IMR-90 (cell line): ENCODE measurements at regions of chr18 and their contacts with region 1.

Region 1: GRCh38 chr18:75209129-75209950 is at the start of gene PTGR3:
- DNase-seq: peak; percentile 73
- ATAC-seq: peak; percentile 57
- H3K4me3 ChIP-seq: peak within 1 kb of the TSS; percentile 90
- H3K27ac ChIP-seq: peak within 1 kb of the TSS; percentile 98
- H3K4me1 ChIP-seq: peaks cover 5% of the 10 kb centered on the region
- H3K27me3 ChIP-seq: no peaks in the 10 kb centered on the region
- CTCF ChIP-seq: no peak
- POLR2A ChIP-seq: no peak; the same call in 1 of the 2 replicates
- RAD21 ChIP-seq: no peak
- total RNA-seq, gene PTGR3: 16.1 and 16.9 TPM in 2 replicates

Region 2: GRCh38 chr18:74896390-74896991 is 312.8 kb before region 1 on chr18:
- CTCF ChIA-PET with region 1: no interaction called
- POLR2A ChIA-PET with region 1: no interaction called
- dilution Hi-C with region 1: no loop called
- in situ Hi-C with region 1: no loop called
- intact Hi-C with region 1: loop called (anchors 5 kb)
- DNase-seq: peak; percentile 12
- ATAC-seq: no peak
- H3K4me3 ChIP-seq: no peak overlapping the region
- H3K27ac ChIP-seq: no peak overlapping the region
- H3K4me1 ChIP-seq: peaks cover 7% of the 10 kb centered on the region
- H3K27me3 ChIP-seq: no peaks in the 10 kb centered on the region
- CTCF ChIP-seq: 0 out of 2 replicates have a peak, but pooled peaks have one; percentile 11
- POLR2A ChIP-seq: no peak
- RAD21 ChIP-seq: peak; percentile 24; the same call in 1 of the 2 replicates

Region 3: DNA sequence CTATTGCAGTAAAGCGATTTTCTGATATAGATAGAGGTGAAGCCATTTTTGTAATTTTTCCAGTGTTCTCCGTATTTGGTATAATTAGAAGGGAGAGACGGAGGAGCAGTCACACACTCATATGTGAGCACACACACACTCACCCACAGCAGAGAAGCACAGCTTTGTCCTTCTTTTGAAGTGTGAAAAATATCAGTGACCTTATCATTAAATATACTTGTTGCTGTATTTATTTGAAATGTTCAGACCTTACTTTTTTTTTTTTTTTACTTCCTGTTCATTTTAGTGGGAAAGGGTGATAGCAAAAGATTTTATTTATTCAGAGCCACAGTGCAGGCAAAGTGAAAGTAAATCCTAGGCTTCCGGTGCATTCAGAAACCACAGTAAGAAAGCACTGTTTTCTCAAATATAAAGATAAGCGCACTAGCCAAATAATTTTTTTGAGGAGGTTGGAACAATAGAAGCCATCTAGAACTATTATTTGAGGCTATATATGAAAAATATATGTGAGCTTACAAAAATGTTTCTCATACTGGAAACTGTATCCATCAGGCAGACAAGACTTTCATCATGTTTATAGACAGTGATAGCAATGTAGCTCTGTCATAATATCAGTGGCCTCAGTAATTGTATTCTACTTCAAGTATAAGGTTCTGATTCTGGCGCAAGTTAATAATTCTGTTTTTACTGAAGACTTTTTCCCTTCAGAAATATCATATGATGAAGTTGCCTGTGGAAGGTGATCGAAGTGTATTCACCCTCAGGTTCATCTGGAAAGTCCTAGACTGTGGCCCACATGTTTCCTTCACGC is 38.5 kb after region 1 on chr18:
- CTCF ChIA-PET with region 1: no interaction called
- POLR2A ChIA-PET with region 1: no interaction called
- dilution Hi-C with region 1: no loop called
- in situ Hi-C with region 1: no loop called
- intact Hi-C with region 1: loop called (anchors 2 kb)
- DNase-seq: peak; percentile 65
- ATAC-seq: peak; percentile 72
- H3K4me3 ChIP-seq: peak overlapping the region; percentile 40
- H3K27ac ChIP-seq: peak overlapping the region; percentile 96
- H3K4me1 ChIP-seq: peaks cover 16% of the 10 kb centered on the region
- H3K27me3 ChIP-seq: no peaks in the 10 kb centered on the region
- CTCF ChIP-seq: no peak
- POLR2A ChIP-seq: no peak
- RAD21 ChIP-seq: no peak

Region 4: GRCh38 chr18:75478996-75479880 is 269.9 kb after region 1 on chr18:
- CTCF ChIA-PET with region 1: interaction called, 3 read pairs
- POLR2A ChIA-PET with region 1: interaction called, 9 read pairs
- dilution Hi-C with region 1: no loop called
- in situ Hi-C with region 1: loop called (anchors 5 kb)
- intact Hi-C with region 1: loop called (anchors 1 kb)
- DNase-seq: peak; percentile 59
- ATAC-seq: peak; percentile 49
- H3K4me3 ChIP-seq: no peak overlapping the region
- H3K27ac ChIP-seq: no peak overlapping the region
- H3K4me1 ChIP-seq: peaks cover 11% of the 10 kb centered on the region
- H3K27me3 ChIP-seq: no peaks in the 10 kb centered on the region
- CTCF ChIP-seq: peak; percentile 70
- POLR2A ChIP-seq: no peak
- RAD21 ChIP-seq: peak; percentile 72

Region 5: GRCh38 chr18:75727456-75727855 is 518.1 kb after region 1 on chr18:
- CTCF ChIA-PET with region 1: no interaction called
- POLR2A ChIA-PET with region 1: no interaction called
- dilution Hi-C with region 1: no loop called
- in situ Hi-C with region 1: no loop called
- intact Hi-C with region 1: loop called (anchors 1 kb)
- DNase-seq: peak; percentile 30
- ATAC-seq: 0 out of 2 replicates have a peak, but pooled peaks have one; percentile 44
- H3K4me3 ChIP-seq: no peak overlapping the region
- H3K27ac ChIP-seq: no peak overlapping the region
- H3K4me1 ChIP-seq: no peaks in the 10 kb centered on the region
- H3K27me3 ChIP-seq: peaks cover 2% of the 10 kb centered on the region
- CTCF ChIP-seq: peak; percentile 48
- POLR2A ChIP-seq: no peak
- RAD21 ChIP-seq: peak; percentile 66